Lower leg skin (tissue), 4 donors: ENCODE measurements at regions of chr22 and their contacts with region 1.

Region 1: DNA sequence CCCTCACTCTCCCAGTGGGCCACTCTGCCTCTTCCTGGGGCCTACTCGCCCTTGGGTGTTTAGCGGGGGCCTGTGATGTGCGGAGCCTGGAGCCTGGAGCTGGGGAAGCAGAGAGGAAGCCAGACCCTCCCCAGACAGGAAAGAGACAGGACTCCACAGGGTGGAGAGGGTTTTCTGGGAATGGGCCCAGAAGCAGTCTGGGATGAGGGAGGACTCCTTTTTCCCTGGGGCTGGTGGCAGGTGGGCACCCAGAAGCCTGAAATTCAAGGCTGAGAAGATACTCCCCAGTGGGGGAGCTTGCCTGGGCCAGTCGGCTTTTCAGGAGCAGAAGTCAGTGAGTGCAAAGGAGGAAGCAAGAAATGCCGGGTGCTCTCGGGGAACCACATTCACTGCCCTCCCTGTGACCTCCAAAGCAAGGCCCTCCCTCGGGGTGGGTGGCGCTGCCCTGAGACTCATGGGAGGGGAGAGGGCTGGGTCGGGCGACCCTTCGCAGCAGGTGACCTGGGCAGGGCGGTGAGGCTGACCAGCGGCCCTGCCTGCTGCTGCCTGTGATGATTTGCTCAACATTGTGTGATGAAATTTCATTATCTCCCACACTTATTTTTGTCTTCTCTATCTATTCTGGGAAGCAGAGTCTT is 1377.4 kb downstream of the BRD1 start:
- DNase-seq: no peak
- H3K4me3 ChIP-seq: no peak overlapping the region
- CTCF ChIP-seq: no peak
- POLR2A ChIP-seq: no peak

Region 2: DNA sequence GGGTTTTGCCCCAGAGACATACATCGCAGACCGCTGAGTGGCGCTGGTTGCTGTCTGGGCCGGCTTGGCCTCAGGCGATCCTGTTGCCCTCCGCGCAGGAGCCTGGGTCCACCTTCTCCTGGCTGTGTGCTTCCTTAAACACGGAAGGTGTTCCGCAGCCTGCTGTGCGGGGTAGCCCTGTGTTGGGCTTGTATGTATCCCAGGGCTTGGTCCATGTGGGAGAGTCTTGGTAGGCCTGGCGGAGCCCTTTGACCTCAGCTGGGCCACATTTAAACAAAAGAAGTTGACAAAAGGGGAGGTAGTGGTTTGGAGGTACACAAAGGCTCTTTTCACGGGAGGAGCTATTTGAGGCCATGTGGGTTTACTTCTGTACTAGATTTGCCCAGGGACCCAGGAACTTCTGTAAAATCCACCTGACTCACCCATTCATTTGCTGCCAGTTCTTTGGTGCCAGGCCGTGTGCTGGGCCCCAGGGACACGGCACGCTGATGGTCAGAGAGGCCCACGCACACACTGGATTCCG is 1841.1 kb before region 1 on chr22:
- intact Hi-C with region 1: loop called (anchors 5 kb)
- DNase-seq: no peak
- H3K4me3 ChIP-seq: no peak overlapping the region
- CTCF ChIP-seq: no peak
- POLR2A ChIP-seq: no peak